HEK293 (cell line): ENCODE measurements at regions of chr6 and their contacts with region 1.

Region 1: GRCh38 chr6:106223300-106223930 is 102.1 kb downstream of the ATG5 start:
- H3K4me3 ChIP-seq: no peak overlapping the region
- H3K27ac ChIP-seq: no peak overlapping the region
- H3K4me1 ChIP-seq: no peaks in the 10 kb centered on the region
- CTCF ChIP-seq: peak; percentile 25; the same call in 1 of the 2 replicates

Region 2: DNA sequence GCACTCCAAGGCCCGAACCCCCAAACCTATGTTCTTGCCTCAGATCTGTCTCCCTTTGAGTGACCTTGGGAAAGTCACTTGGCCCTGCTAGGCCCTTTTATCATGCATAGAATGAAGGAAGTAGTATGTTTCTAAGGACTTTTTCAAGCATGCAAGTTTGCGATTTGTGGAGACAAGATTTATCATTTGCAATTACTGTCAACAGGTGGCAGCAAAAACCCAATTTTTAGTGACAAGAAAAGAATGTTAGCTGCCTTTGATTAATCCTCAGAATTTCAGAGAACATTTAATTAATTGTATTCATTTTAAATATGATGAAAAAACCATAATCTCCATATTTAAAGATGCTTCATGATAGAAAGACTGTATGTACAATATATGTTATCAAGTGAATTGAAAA is 792.2 kb before region 1 on chr6:
- CTCF ChIA-PET with region 1: interaction called, 45 read pairs
- POLR2A ChIA-PET with region 1: no interaction called
- H3K4me3 ChIP-seq: no peak overlapping the region
- H3K27ac ChIP-seq: no peak overlapping the region
- H3K4me1 ChIP-seq: no peaks in the 10 kb centered on the region
- CTCF ChIP-seq: no peak

Region 3: GRCh38 chr6:105733565-105734162 is 489.8 kb before region 1 on chr6:
- CTCF ChIA-PET with region 1: interaction called, 13 read pairs
- POLR2A ChIA-PET with region 1: no interaction called
- H3K4me3 ChIP-seq: no peak overlapping the region
- H3K27ac ChIP-seq: no peak overlapping the region
- H3K4me1 ChIP-seq: no peaks in the 10 kb centered on the region
- CTCF ChIP-seq: no peak

Region 4: GRCh38 chr6:106085984-106086813 is 137.2 kb before region 1 on chr6 and contains the start of gene PRDM1:
- CTCF ChIA-PET with region 1: interaction called, 32 read pairs
- POLR2A ChIA-PET with region 1: interaction called, 4 read pairs
- H3K4me3 ChIP-seq: peak within 1 kb of the TSS; percentile 52
- H3K27ac ChIP-seq: peak within 1 kb of the TSS; percentile 21; the same call in 1 of the 2 replicates
- H3K4me1 ChIP-seq: peaks cover 8% of the 10 kb centered on the region
- CTCF ChIP-seq: peak; percentile 75

Region 5: GRCh38 chr6:106141441-106142237 is 81.8 kb before region 1 on chr6:
- CTCF ChIA-PET with region 1: interaction called, 10 read pairs
- POLR2A ChIA-PET with region 1: no interaction called
- H3K4me3 ChIP-seq: no peak overlapping the region
- H3K27ac ChIP-seq: no peak overlapping the region
- H3K4me1 ChIP-seq: no peaks in the 10 kb centered on the region
- CTCF ChIP-seq: no peak

Region 6: DNA sequence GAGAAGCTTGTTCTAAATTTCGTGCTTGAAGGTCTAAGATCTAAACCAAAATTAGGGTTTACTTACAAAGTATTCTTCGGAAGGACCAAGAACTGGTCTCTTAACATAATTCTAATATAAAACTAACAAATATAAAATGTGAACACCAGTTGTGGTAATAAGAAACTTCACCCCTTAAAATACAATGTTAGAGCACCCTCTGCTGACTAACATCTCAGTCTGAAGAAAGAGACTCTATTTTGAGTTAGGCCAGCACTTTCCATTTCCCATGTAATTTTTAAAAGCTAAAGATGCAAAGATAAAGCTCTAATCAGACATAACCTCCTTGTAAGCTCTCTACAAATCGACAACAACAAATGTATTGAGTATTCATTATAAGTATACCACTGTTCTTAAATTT is 77.5 kb after region 1 on chr6:
- CTCF ChIA-PET with region 1: interaction called, 22 read pairs
- POLR2A ChIA-PET with region 1: no interaction called
- H3K4me3 ChIP-seq: no peak overlapping the region
- H3K27ac ChIP-seq: no peak overlapping the region
- H3K4me1 ChIP-seq: no peaks in the 10 kb centered on the region
- CTCF ChIP-seq: no peak